CD4-positive, alpha-beta memory T cell (primary cell): ENCODE measurements at regions of chr12 and their contacts with region 1.

Region 1: GRCh38 chr12:62259993-62260732 is at the start of gene USP15:
- DNase-seq: peak; percentile 95 to 98 (median 97)
- H3K4me3 ChIP-seq: peak within 1 kb of the TSS; percentile 82 to 94
- H3K4me3 Mint-ChIP-seq: peak within 1 kb of the TSS; percentile 93 to 100 (median 98)
- H3K27ac ChIP-seq: peak within 1 kb of the TSS; percentile 90
- H3K27ac Mint-ChIP-seq: peak within 1 kb of the TSS; percentile 95 to 100 (median 99)
- H3K4me1 ChIP-seq: peaks cover 71% of the 10 kb centered on the region
- H3K4me1 Mint-ChIP-seq: peaks cover 31 to 76% (median 41%) of the 10 kb centered on the region in 4 donors
- H3K27me3 ChIP-seq: no peaks in the 10 kb centered on the region
- H3K27me3 Mint-ChIP-seq: no peaks in the 10 kb centered on the region
- total RNA-seq, gene USP15: 150 to 156 TPM

Region 2: GRCh38 chr12:62215506-62215905 is 44.7 kb before region 1 on chr12:
- CTCF ChIA-PET with region 1: interaction called, 4 read pairs
- POLR2A ChIA-PET with region 1: interaction called, 19 read pairs
- intact Hi-C with region 1: loop called (anchors 1 kb)
- DNase-seq: no peak
- H3K4me3 ChIP-seq: no peak overlapping the region
- H3K4me3 Mint-ChIP-seq: peak overlapping the region in 4 of 8 donors; percentile 6 to 53 (median 30)
- H3K27ac ChIP-seq: no peak overlapping the region
- H3K27ac Mint-ChIP-seq: peak overlapping the region in 6 of 7 donors; percentile 22 to 76 (median 44)
- H3K4me1 ChIP-seq: peaks cover 18% of the 10 kb centered on the region
- H3K4me1 Mint-ChIP-seq: peaks cover 0 to 18% (median 10%) of the 10 kb centered on the region in 4 donors
- H3K27me3 ChIP-seq: no peaks in the 10 kb centered on the region
- H3K27me3 Mint-ChIP-seq: peaks cover 0 to under 1% of the 10 kb centered on the region in 2 donors

Region 3: GRCh38 chr12:62347922-62348650 is 87.9 kb after region 1 on chr12:
- CTCF ChIA-PET with region 1: no interaction called
- POLR2A ChIA-PET with region 1: no interaction called
- intact Hi-C with region 1: loop called (anchors 5 kb)
- DNase-seq: no peak
- H3K4me3 ChIP-seq: no peak overlapping the region
- H3K4me3 Mint-ChIP-seq: no peak overlapping the region
- H3K27ac ChIP-seq: no peak overlapping the region
- H3K27ac Mint-ChIP-seq: peak overlapping the region in 1 of 7 donors; percentile 60
- H3K4me1 ChIP-seq: peaks cover 8% of the 10 kb centered on the region
- H3K4me1 Mint-ChIP-seq: peaks cover 25 to 36% (median 29%) of the 10 kb centered on the region in 4 donors
- H3K27me3 ChIP-seq: no peaks in the 10 kb centered on the region
- H3K27me3 Mint-ChIP-seq: no peaks in the 10 kb centered on the region

Region 4: DNA sequence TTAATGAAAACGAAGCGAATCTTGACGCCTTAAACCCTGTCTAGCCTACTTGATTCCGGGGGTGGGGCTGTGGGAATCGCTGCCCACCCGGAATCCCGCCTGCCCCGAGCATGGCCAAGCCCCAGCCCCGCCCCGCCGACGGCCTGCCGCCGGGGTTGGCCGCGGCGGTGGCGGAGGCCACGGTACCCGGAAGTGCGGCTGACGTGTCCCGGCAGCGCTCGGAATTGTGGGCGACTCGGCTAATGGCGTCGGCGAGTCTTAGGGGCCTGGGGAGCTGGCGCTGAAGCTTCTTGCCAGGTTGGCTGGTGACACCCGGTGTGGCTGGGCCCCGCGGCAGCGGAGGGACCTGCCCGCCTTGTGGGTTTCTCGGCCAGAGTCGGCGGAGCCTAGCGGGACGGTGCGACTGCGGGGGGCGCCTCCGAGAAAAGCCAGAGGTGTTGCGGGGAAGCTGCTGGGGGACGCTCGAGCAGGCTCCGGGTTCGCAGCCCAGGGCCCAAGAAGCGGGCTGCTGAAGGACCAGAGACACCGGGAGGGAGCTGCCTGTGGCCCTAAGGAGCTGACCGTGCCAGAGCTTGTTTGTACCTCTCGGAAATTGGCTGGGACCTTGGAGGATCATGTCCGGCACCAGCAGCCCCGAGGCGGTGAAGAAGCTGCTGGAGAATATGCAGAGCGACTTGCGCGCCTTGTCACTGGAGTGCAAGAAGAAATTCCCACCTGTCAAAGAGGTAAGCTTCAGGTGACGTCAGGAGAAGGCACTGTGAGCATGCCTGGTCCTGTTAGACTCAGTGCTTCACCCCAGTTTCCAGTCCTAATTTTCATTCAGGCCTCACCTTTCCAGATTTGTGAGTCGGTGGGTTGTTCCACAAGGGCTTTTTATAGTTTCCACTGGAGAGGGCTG is 206.7 kb after region 1 on chr12 and contains the start of gene MON2:
- CTCF ChIA-PET with region 1: interaction called, 3 read pairs
- POLR2A ChIA-PET with region 1: interaction called, 23 read pairs
- intact Hi-C with region 1: loop called (anchors 1 kb)
- DNase-seq: peak; percentile 86 to 88 (median 87)
- H3K4me3 ChIP-seq: peak within 1 kb of the TSS; percentile 72 to 83
- H3K4me3 Mint-ChIP-seq: peak within 1 kb of the TSS; percentile 83 to 97 (median 94)
- H3K27ac ChIP-seq: peak within 1 kb of the TSS; percentile 91
- H3K27ac Mint-ChIP-seq: peak within 1 kb of the TSS; percentile 85 to 99 (median 97)
- H3K4me1 ChIP-seq: peaks cover 42% of the 10 kb centered on the region
- H3K4me1 Mint-ChIP-seq: peaks cover 19 to 31% (median 23%) of the 10 kb centered on the region in 4 donors
- H3K27me3 ChIP-seq: no peaks in the 10 kb centered on the region
- H3K27me3 Mint-ChIP-seq: peaks cover 0 to 3% of the 10 kb centered on the region in 2 donors
- total RNA-seq, gene MON2: 82.0 to 88.5 TPM

Region 5: DNA sequence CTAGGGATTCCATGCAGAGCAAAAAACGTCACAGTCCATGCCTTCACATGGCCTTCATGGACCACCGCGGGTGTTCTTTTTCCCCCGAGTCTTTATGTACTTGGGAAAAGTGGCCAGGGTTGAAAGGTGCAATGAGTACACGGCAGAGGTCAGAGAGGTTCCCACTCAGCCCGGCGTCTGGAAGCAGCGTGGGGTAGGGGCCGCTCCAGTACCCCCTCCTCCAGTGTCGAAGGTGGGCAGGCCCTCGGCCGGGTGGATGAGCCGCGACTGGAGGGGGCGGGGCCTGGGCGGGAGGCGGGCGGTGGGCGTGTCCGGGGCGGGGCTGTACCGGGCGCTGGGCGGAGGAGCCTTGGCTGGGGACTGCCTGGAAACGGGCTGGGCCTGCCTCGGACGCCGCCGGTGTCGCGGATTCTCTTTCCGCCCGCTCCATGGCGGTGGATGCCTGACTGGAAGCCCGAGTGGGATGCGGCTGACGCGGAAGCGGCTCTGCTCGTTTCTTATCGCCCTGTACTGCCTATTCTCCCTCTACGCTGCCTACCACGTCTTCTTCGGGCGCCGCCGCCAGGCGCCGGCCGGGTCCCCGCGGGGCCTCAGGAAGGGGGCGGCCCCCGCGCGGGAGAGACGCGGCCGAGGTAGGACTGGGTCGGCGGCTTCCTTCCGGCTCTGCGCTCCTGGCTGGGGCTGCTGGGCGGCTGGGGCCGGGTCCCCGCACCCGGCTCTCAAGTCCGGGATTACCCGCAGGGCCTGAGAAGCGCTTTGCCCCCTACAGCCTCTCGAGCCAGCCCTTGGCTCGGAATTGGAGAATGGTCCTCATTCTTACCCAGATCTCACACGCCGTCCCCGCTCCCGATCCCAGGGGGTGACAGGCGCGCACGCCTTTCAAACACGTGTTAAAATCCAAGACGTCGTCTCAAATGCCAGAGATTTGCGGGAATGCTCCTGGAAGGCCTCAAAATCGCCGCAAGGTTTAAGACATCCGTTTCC is 1519.6 kb after region 1 on chr12 and contains the start of gene RXYLT1:
- CTCF ChIA-PET with region 1: no interaction called
- POLR2A ChIA-PET with region 1: no interaction called
- intact Hi-C with region 1: loop called (anchors 1 kb)
- DNase-seq: peak; percentile 74 to 86 (median 81)
- H3K4me3 ChIP-seq: peak within 1 kb of the TSS; percentile 38 to 96
- H3K4me3 Mint-ChIP-seq: peak within 1 kb of the TSS; percentile 93 to 99 (median 97)
- H3K27ac ChIP-seq: peak within 1 kb of the TSS; percentile 84
- H3K27ac Mint-ChIP-seq: peak within 1 kb of the TSS; percentile 91 to 98 (median 95)
- H3K4me1 ChIP-seq: peaks cover 19% of the 10 kb centered on the region
- H3K4me1 Mint-ChIP-seq: peaks cover 11 to 35% (median 16%) of the 10 kb centered on the region in 4 donors
- H3K27me3 ChIP-seq: no peaks in the 10 kb centered on the region
- H3K27me3 Mint-ChIP-seq: no peaks in the 10 kb centered on the region
- total RNA-seq, gene RXYLT1: 14.5 to 15.1 TPM